ENCODE measurements at regions of chr3 and their contacts with region 1.

Region 1: DNA sequence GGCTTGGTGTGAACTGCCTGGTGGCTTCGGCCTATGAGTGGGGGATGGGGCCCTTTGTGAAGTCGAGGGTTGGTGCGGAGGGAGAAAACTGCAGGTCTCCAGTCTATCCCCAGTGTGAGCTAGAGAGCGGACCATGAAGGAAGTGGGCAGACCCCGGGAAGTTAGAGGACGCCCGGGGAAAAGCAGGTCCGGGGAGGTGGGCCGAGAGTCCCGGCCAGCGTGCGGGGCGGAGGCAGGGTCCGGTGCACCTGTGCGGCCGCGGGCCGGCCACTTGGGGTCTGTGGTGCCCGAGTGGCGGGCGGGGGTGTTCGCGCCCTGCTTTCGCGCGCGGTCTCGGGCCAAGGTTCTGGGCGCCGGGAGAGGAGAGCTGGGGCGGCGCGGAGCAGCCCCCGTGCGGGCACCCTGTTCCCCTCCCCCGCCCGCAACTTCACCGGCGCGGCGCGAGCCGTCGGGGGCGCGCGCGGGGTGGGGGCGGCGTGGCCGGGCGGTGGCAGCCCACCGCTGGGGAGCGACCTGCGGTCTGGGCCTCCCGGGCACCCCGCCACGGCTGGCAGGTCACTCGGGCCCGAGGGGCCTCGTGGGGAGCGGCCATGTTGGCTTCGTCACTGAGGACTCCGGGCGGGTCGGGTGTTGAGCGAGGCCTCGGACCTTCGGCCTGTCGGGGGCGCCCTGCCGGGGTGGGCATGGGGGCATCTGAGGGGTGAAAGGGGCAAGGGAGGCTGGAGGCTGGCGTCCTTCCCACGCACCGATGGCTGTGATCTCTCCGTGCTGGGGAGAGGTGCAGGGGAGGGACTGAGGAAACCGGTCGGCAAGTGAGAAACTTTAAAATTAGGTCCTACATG is 4.8 kb downstream of the UBE2E1 start:
- DNase-seq: peak in 38 of 42 donors; percentile 34 to 78 (median 55)

Region 2: DNA sequence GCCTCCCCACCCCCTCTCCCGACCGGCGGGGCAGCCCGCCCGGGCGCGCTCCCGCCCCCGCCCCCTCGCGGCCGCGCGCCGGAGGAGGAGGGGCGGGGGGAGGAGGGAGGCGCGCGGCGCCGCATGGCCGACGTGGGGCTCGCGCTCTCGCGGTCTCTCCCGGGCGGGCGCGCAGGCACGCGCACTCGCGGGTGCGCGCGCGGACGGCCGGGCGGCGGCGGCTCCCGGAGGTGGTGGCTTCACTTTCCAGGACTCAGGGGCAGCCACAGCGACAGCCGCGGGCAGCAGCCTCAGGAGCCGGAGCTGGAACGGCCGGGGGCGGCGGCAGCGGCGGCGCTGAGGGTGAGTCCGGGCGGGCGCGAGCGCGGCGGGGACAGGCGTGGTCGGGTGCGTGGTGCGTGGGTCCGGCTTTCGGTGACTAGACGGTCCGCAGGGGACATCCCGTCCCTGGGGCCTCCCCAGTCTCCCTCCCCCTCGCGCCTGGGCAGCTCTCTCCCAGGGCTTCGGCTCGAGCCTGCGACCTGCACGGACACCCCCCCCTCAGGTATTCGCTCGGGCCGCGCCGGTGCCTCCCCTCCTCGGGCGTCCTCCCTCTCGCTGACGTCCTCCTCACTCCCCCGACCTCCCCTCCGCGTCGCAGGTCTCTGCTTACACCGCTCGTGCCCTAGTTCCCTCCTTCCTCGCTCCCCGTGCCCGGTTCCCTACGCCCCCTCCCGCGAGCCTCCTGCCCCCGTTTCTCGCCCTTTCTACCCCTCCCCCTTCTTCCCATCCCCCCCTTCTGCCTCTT is 607.5 kb before region 1 on chr3 and contains the start of gene UBE2E2:
- intact Hi-C with region 1: loop called (anchors 10 kb)
- DNase-seq: peak in 39 of 42 donors; percentile 25 to 89 (median 77)

Measured in head of caudate nucleus (tissue), 42 donors.